WTC11 (cell line): ENCODE measurements at regions of chr1 and their contacts with region 1.

Region 1: GRCh38 chr1:63148825-63149645 is 173.3 kb upstream of the FOXD3 start:
- DNase-seq: peak; percentile 66
- ATAC-seq: peak; percentile 100
- H3K4me3 Mint-ChIP-seq: no peak overlapping the region
- H3K27ac Mint-ChIP-seq: no peak overlapping the region
- H3K4me1 Mint-ChIP-seq: peaks cover 4% of the 10 kb centered on the region
- H3K27me3 Mint-ChIP-seq: no peaks in the 10 kb centered on the region
- CTCF ChIP-seq: peak; percentile 50; the same call in 1 of the 2 replicates

Region 2: DNA sequence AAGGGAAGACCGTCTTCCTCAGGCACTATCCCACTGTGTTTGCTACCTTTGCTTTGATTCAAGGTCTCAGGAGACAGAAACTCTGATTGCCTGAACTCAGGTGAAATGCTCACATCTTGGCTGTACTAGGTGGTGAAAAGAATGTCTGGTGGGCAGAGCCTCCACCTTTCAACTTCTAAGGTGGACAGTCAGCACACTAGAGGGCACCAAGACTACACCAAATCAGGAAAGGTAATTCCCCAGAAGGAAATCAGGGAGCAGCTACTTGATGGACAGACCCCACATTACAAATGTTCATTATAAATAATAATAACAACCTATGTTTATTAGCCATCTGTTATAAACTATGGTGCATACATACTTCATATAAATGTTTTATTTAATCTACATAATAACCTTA is 144.2 kb before region 1 on chr1:
- CTCF ChIA-PET with region 1: interaction called, 27 read pairs
- POLR2A ChIA-PET with region 1: no interaction called
- DNase-seq: peak; percentile 37
- ATAC-seq: peak; percentile 84
- H3K4me3 Mint-ChIP-seq: no peak overlapping the region
- H3K27ac Mint-ChIP-seq: no peak overlapping the region
- H3K4me1 Mint-ChIP-seq: peaks cover 19% of the 10 kb centered on the region
- H3K27me3 Mint-ChIP-seq: no peaks in the 10 kb centered on the region
- CTCF ChIP-seq: no peak

Region 3: GRCh38 chr1:63087966-63088365 is 61.1 kb before region 1 on chr1:
- CTCF ChIA-PET with region 1: interaction called, 18 read pairs
- POLR2A ChIA-PET with region 1: interaction called, 8 read pairs
- DNase-seq: peak; percentile 74
- ATAC-seq: peak; percentile 100
- H3K4me3 Mint-ChIP-seq: no peak overlapping the region
- H3K27ac Mint-ChIP-seq: 0 out of 2 replicates have a peak overlapping the region, but pooled peaks have one; percentile 62
- H3K4me1 Mint-ChIP-seq: peaks cover 17% of the 10 kb centered on the region
- H3K27me3 Mint-ChIP-seq: peaks cover 4% of the 10 kb centered on the region; the same call in 1 of the 2 replicates
- CTCF ChIP-seq: no peak

Region 4: DNA sequence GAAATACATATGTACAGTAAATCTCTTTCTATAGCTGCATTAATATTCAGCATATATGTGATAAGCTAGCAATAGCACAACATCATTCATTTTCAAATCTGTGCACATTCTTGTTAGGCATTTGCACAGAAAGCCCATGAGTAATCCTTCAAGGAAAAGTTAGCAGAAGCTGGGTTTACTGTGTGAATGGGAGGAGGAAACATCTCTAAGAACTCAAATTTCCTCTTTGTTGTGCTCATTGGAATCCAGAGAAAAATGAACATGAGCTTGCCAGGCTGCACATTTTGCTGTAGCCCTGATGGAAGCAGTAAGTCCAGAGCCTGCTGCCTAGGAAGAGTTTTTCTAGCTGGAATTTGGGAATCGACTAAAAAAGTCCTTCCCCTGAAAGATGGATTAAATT is 40.8 kb before region 1 on chr1:
- CTCF ChIA-PET with region 1: interaction called, 21 read pairs
- POLR2A ChIA-PET with region 1: no interaction called
- DNase-seq: no peak
- ATAC-seq: no peak
- H3K4me3 Mint-ChIP-seq: no peak overlapping the region
- H3K27ac Mint-ChIP-seq: no peak overlapping the region
- H3K4me1 Mint-ChIP-seq: peaks cover 72% of the 10 kb centered on the region
- H3K27me3 Mint-ChIP-seq: no peaks in the 10 kb centered on the region
- CTCF ChIP-seq: no peak

Region 5: GRCh38 chr1:63135174-63135512 is 13.9 kb before region 1 on chr1:
- CTCF ChIA-PET with region 1: interaction called, 31 read pairs
- POLR2A ChIA-PET with region 1: no interaction called
- DNase-seq: no peak
- ATAC-seq: no peak
- H3K4me3 Mint-ChIP-seq: no peak overlapping the region
- H3K27ac Mint-ChIP-seq: no peak overlapping the region
- H3K4me1 Mint-ChIP-seq: no peaks in the 10 kb centered on the region
- H3K27me3 Mint-ChIP-seq: peaks cover 2% of the 10 kb centered on the region; the same call in 1 of the 2 replicates
- CTCF ChIP-seq: no peak